Activated CD4-positive, alpha-beta T cell treated with anti-CD3 and anti-CD28 coated beads, Interleukin-2, amount 10 ng/mL, durations not matched to agents 7 days and 5 days (primary cell): ENCODE measurements at regions of chr14 and their contacts with region 1.

Region 1: GRCh38 chr14:74860906-74861733 is 14.8 kb downstream of the PROX2 start:
- DNase-seq: peak; percentile 95
- H3K4me3 Mint-ChIP-seq: no peak overlapping the region
- H3K27ac Mint-ChIP-seq: no peak overlapping the region
- H3K4me1 Mint-ChIP-seq: peaks cover 5% of the 10 kb centered on the region
- H3K27me3 Mint-ChIP-seq: no peaks in the 10 kb centered on the region

Region 2: GRCh38 chr14:74841230-74842207 is 19.6 kb before region 1 on chr14:
- CTCF ChIA-PET with region 1: interaction called, 41 read pairs
- POLR2A ChIA-PET with region 1: interaction called, 4 read pairs
- DNase-seq: peak; percentile 56
- H3K4me3 Mint-ChIP-seq: peak overlapping the region; percentile 18
- H3K27ac Mint-ChIP-seq: peak overlapping the region; percentile 91
- H3K4me1 Mint-ChIP-seq: peaks cover 58% of the 10 kb centered on the region
- H3K27me3 Mint-ChIP-seq: no peaks in the 10 kb centered on the region

Region 3: DNA sequence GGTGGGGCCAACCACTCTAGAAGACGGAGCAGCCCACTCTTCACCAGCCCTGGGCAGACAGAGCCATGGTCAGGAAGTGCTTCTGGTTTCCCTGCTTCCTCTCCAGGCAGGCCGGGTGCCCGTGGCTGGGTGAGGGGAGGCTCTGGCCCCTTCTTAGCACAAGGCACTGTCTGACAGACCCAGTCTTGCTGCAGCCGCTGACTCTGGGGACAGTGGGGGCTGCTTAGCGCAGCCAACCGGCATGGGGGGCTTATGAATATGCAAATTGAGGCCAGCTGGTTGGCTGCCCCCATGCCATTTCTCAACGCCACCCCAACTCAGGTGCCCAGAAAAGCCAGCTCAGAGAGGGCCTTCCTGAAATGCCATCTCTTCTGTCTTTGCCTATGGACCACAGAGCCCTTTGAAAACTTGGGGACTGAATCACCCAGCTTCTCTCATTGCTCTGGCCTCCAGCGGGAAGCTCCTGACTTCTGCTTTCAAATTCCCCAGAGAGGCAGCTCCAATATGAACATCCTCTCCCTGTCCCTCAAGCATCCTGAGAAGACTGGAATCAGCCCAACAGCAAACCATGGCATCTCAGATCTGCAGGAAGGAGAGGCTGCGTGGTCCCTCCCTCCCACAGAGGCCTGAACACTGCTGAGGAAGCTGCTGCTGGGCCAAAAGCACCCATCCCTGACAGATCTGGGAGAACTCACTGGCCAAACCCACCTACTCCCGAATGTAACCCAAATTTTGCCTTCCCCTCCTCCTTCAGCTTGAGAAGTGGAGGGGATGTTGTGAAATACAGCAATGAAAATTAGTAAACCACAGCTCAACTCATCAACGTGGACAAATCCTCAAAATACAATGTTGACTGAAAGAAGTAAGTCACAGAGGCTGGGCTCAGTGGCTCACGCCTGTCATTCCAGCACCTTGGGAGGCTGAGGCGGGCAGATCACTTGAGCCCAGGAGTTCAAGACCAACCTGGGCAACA is 15.1 kb after region 1 on chr14 and contains the start of gene PROX2:
- CTCF ChIA-PET with region 1: interaction called, 66 read pairs
- POLR2A ChIA-PET with region 1: interaction called, 5 read pairs
- DNase-seq: peak; percentile 19
- H3K4me3 Mint-ChIP-seq: no peak within 1 kb of the TSS
- H3K27ac Mint-ChIP-seq: peak within 1 kb of the TSS; percentile 68
- H3K4me1 Mint-ChIP-seq: peaks cover 32% of the 10 kb centered on the region
- H3K27me3 Mint-ChIP-seq: no peaks in the 10 kb centered on the region
- total RNA-seq, gene PROX2: not detected

Region 4: DNA sequence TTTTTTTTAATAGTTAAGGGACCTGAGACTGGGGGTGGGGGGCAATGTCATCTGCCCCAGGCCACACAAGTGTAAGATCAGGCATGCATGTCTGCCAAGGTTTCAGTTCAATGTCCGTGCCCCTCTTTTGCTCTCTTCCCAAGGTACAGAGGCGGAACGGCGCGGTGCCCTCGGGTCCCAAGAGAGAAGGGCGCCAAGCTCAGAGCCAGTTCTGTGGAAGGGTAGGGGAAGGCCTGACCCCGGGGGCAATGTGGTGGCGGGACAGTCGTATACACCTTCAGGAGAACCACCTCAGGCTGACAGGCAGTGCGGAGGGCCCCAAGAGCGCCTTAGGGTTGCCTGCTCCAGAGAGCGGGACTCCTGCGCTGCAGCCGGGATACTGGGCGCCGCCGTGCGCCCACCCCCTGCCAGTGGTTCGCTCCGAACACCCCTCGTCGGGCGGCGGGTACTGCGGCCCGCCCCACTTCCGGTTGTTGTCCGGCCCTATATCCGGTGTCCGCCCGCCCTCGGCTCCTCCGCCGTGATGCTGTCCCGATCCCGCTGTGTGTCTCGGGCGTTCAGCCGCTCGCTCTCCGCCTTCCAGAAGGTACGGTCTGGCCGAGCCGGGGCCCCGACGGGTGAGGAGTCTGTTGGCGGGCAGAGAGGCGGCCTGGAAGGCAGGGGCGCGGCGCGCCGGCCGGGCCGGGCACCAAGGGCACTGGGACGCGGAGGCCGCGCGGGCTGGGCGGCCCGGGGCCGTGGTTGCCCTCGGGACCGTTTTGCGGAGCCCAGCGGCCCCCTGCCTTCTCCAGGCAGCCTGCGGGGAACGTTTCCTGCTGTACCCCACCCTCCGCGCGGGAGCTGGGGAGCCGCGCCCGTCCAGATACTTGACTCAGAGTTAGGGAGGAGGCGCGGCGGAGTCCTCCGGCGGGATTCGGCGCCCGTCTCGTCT is 20.6 kb after region 1 on chr14 and contains the start of gene DLST:
- CTCF ChIA-PET with region 1: interaction called, 66 read pairs
- POLR2A ChIA-PET with region 1: interaction called, 5 read pairs
- DNase-seq: peak; percentile 85
- H3K4me3 Mint-ChIP-seq: peak within 1 kb of the TSS; percentile 100
- H3K27ac Mint-ChIP-seq: peak within 1 kb of the TSS; percentile 98
- H3K4me1 Mint-ChIP-seq: peaks cover 58% of the 10 kb centered on the region
- H3K27me3 Mint-ChIP-seq: no peaks in the 10 kb centered on the region
- total RNA-seq, gene DLST: 92.6 to 106 TPM

Region 5: DNA sequence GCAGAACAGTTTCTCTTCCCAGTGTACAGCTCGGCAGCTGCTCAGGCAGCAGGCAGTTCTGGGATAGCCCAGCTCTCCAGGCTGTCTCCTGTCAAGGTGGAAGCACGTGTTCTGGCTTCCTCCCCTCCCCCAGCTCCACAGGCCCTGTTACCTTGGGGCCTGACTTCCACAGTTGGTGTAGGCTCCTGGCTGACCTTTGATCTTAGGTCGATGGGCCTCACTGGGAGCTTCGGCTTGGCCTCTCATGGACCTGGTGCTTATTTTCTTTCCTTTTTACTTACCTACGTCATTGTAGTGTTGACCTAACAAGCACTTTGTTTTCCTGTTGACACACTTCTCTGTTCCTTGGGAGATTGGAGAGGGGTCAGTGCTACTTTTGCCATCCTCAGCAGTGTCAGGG is 37.6 kb after region 1 on chr14:
- CTCF ChIA-PET with region 1: interaction called, 16 read pairs
- POLR2A ChIA-PET with region 1: no interaction called
- DNase-seq: no peak
- H3K4me3 Mint-ChIP-seq: no peak overlapping the region
- H3K27ac Mint-ChIP-seq: no peak overlapping the region
- H3K4me1 Mint-ChIP-seq: no peaks in the 10 kb centered on the region
- H3K27me3 Mint-ChIP-seq: no peaks in the 10 kb centered on the region

Region 6: DNA sequence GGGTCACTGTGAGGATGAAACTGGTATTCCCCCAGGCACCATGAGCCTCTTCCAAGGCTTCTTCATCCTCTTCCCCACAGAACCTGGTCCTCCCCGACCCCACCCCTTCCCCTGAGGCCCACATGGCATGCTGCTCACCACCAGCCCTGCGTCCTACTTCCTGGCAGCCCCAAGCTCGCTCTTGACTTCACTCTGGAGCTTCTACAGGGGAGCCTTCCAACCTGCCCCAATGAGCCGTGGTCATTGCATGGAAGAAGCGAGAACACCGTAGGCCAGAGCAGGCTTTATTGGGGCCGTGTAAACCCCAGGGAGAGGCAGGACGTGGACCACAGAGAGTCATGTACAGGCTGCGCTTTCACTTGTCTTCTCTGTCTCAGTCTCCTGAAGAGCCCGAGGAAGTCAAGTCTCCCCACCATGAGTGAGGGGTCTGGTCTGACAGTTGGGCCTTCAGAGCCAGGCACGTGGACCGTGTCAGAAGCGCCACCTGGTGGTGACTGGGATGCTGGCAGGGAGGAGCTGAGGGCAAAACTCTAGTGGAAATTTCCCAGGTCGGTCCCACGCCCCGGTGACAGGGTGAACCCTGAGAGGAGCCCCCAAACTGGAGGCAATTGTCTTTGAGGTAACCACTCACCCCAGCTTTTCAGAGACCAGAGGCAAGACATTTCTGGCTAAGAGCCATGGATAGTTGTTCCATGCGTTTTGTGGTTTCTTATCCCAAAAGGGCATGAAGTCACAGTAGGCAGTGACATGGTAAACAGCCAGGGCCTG is 44.4 kb after region 1 on chr14:
- CTCF ChIA-PET with region 1: interaction called, 138 read pairs
- POLR2A ChIA-PET with region 1: interaction called, 8 read pairs
- DNase-seq: peak; percentile 81
- H3K4me3 Mint-ChIP-seq: no peak overlapping the region
- H3K27ac Mint-ChIP-seq: peak overlapping the region; percentile 60
- H3K4me1 Mint-ChIP-seq: peaks cover 9% of the 10 kb centered on the region
- H3K27me3 Mint-ChIP-seq: no peaks in the 10 kb centered on the region